Activated naive CD4-positive, alpha-beta T cell treated with anti-CD3 and anti-CD28 coated beads, Interleukin-2, amount 10 ng/mL, durations not matched to agents 7 days and 5 days (primary cell): ENCODE measurements at regions of chr4 and their contacts with region 1.

Region 1: GRCh38 chr4:108018040-108018883 is 28.6 kb downstream of the HADH start:
- DNase-seq: peak; percentile 91
- H3K4me3 Mint-ChIP-seq: no peak overlapping the region
- H3K27ac Mint-ChIP-seq: peak overlapping the region; percentile 66
- H3K4me1 Mint-ChIP-seq: peaks cover 23% of the 10 kb centered on the region
- H3K27me3 Mint-ChIP-seq: no peaks in the 10 kb centered on the region

Region 2: GRCh38 chr4:108036213-108036612 is 18.0 kb after region 1 on chr4:
- CTCF ChIA-PET with region 1: interaction called, 50 read pairs
- DNase-seq: peak; percentile 88
- H3K4me3 Mint-ChIP-seq: peak overlapping the region; percentile 57
- H3K27ac Mint-ChIP-seq: peak overlapping the region; percentile 98
- H3K4me1 Mint-ChIP-seq: peaks cover 64% of the 10 kb centered on the region
- H3K27me3 Mint-ChIP-seq: no peaks in the 10 kb centered on the region

Region 3: DNA sequence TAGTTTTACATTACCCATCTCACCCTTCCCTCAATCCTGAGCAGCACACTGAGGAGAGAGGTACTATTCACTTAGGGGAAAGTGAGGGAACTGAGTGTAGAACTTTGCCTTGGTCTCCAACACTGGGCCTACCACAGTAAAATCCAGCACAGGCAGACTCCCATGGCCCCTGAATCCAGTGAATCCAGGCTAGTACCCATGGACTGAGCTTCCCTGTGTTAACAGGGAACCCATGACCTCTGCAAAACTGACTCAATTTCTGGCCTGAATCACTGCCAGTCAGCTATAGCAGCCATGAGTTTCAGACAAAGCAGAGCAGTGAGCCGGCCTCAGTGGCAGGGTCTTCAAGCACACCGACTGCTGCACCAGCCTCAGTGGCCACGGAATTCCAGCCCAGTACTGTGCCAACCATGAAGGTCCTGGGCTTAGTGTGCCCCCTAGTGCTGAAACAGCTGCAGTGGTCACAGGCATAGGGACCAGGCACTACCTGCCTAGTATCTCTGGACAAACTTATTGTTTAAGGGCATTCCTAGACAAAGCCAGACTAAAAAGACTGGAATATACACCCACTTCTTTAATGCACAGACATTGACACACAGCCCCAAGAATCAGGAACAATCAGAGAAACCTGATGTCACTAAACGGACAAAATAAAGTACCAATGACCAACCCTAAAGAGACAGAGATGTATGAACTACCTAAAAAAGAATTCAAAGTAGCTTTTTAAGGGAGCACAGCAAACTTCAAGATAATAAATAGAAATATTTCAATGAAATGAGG is 474.7 kb after region 1 on chr4:
- CTCF ChIA-PET with region 1: interaction called, 13 read pairs
- DNase-seq: peak; percentile 47
- H3K4me3 Mint-ChIP-seq: no peak overlapping the region
- H3K27ac Mint-ChIP-seq: no peak overlapping the region
- H3K4me1 Mint-ChIP-seq: peaks cover 20% of the 10 kb centered on the region
- H3K27me3 Mint-ChIP-seq: no peaks in the 10 kb centered on the region

Region 4: DNA sequence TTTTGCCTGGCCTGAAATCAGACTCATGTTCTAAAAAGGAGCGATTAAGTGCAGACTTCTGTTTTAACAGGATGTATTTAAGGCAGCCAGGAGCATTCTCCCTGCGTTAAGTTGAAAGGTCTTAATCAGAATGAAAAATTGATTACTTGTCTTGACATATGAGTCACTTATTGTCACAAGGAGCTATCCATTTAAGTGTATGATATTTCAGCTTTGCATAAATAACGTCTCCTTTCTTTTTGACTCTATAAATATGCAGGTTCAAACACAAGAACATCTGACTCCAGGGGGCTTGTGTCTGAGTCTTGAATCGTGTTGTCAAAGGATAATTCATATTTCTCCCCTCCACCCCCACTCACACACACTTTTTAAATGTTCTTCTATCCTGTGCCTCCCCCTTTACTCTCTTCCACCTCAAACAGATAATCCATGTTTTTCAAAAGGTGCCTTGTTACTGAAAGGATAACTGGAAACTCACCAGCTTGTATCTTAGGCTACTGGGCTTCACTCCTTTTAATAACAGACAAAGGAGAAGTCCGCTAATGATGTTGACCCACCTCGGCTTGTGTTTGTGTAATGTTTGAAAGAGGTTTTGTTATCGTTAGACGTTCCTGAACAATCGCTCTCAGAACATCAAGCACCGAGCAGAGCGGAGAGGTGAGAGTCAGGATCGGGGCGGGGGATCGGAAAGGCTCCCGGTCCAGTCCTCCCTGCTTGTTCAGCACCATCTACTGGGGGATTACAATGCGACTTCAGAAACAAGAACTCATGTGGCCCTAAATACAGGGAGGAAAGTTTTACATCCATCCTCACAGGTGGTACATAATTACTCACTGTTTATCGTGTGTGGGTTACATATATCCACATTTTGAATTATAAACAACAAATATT is 494.6 kb after region 1 on chr4:
- CTCF ChIA-PET with region 1: interaction called, 13 read pairs
- DNase-seq: peak; percentile 70
- H3K4me3 Mint-ChIP-seq: peak overlapping the region; percentile 19
- H3K27ac Mint-ChIP-seq: no peak overlapping the region
- H3K4me1 Mint-ChIP-seq: peaks cover 22% of the 10 kb centered on the region
- H3K27me3 Mint-ChIP-seq: peaks cover 12% of the 10 kb centered on the region